ENCODE measurements at regions of chr6 and their contacts with region 1.

Region 1: DNA sequence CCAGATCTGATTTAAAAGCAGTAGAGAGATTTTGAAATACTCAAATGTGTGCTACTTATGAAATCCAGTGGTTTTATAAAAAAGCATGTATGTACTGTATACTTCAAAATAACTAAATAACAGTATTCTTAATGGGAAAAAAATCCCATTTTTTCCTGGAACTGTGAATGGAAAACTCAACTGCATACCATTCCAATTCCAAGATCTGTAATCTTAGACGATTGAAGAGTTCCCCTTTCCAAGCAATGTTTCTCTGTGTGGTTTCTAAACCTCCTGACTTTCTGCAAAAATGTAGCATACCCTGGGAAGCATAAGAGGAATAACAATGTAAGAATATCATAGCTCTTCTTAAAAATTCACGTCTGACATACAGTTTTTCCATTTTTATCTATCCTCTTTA is 40.3 kb upstream of the HIVEP2 start:
- DNase-seq: no peak
- H3K4me3 ChIP-seq: no peak overlapping the region
- H3K27ac ChIP-seq: no peak overlapping the region
- H3K4me1 ChIP-seq: no peaks in the 10 kb centered on the region
- H3K27me3 ChIP-seq: no peaks in the 10 kb centered on the region
- CTCF ChIP-seq: no peak
- POLR2A ChIP-seq: no peak

Region 2: GRCh38 chr6:142265476-142265875 is 719.8 kb before region 1 on chr6:
- intact Hi-C with region 1: loop called (anchors 10 kb)
- DNase-seq: no peak
- H3K4me3 ChIP-seq: no peak overlapping the region
- H3K27ac ChIP-seq: no peak overlapping the region
- H3K4me1 ChIP-seq: no peaks in the 10 kb centered on the region
- H3K27me3 ChIP-seq: no peaks in the 10 kb centered on the region
- CTCF ChIP-seq: no peak
- POLR2A ChIP-seq: no peak

Region 3: DNA sequence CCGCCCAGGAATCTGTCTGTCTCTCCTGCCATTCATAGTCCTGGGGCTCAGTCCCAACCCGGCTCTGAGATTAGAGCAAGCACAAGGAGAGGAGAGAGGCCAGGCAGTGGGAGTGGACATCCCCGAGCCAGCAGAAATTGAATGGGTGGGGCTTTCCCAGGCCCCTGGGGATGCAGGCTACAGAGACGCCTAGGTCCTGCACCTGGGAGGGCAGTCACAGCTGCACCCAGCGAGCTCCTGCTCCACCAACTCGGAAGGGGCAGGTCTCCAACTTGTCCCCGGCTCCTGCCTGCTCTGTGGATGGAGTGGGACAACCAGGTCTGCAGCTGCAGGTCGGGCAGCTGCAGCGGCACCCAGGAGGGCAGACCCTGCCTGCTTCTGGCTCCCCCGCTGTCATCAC is 64.3 kb after region 1 on chr6:
- intact Hi-C with region 1: no loop called
- DNase-seq: no peak
- H3K4me3 ChIP-seq: no peak overlapping the region
- H3K27ac ChIP-seq: no peak overlapping the region
- H3K4me1 ChIP-seq: no peaks in the 10 kb centered on the region
- H3K27me3 ChIP-seq: no peaks in the 10 kb centered on the region
- CTCF ChIP-seq: no peak
- POLR2A ChIP-seq: no peak